Activated CD4-positive, alpha-beta memory T cell treated with anti-CD3 and anti-CD28 coated beads for 36 hours (primary cell): ENCODE measurements at regions of chr4 and their contacts with region 1.

Region 1: GRCh38 chr4:183840311-183840710 is 64.8 kb upstream of the STOX2 start:
- DNase-seq: peak; percentile 75
- H3K4me3 Mint-ChIP-seq: no peak overlapping the region
- H3K27ac Mint-ChIP-seq: no peak overlapping the region
- H3K4me1 Mint-ChIP-seq: no peaks in the 10 kb centered on the region
- H3K27me3 Mint-ChIP-seq: peaks cover 24% of the 10 kb centered on the region

Region 2: GRCh38 chr4:184097241-184097605 is 256.9 kb after region 1 on chr4:
- CTCF ChIA-PET with region 1: interaction called, 4 read pairs
- POLR2A ChIA-PET with region 1: no interaction called
- intact Hi-C with region 1: loop called (anchors 1 kb)
- DNase-seq: peak; percentile 59
- H3K4me3 Mint-ChIP-seq: peak overlapping the region; percentile 30
- H3K27ac Mint-ChIP-seq: no peak overlapping the region
- H3K4me1 Mint-ChIP-seq: peaks cover 6% of the 10 kb centered on the region
- H3K27me3 Mint-ChIP-seq: peaks cover 14% of the 10 kb centered on the region

Region 3: GRCh38 chr4:184168406-184169019 is 328.2 kb after region 1 on chr4:
- CTCF ChIA-PET with region 1: interaction called, 22 read pairs
- POLR2A ChIA-PET with region 1: no interaction called
- intact Hi-C with region 1: loop called (anchors 1 kb)
- DNase-seq: peak; percentile 70
- H3K4me3 Mint-ChIP-seq: no peak overlapping the region
- H3K27ac Mint-ChIP-seq: no peak overlapping the region
- H3K4me1 Mint-ChIP-seq: peaks cover 2% of the 10 kb centered on the region
- H3K27me3 Mint-ChIP-seq: peaks cover 44% of the 10 kb centered on the region

Region 4: DNA sequence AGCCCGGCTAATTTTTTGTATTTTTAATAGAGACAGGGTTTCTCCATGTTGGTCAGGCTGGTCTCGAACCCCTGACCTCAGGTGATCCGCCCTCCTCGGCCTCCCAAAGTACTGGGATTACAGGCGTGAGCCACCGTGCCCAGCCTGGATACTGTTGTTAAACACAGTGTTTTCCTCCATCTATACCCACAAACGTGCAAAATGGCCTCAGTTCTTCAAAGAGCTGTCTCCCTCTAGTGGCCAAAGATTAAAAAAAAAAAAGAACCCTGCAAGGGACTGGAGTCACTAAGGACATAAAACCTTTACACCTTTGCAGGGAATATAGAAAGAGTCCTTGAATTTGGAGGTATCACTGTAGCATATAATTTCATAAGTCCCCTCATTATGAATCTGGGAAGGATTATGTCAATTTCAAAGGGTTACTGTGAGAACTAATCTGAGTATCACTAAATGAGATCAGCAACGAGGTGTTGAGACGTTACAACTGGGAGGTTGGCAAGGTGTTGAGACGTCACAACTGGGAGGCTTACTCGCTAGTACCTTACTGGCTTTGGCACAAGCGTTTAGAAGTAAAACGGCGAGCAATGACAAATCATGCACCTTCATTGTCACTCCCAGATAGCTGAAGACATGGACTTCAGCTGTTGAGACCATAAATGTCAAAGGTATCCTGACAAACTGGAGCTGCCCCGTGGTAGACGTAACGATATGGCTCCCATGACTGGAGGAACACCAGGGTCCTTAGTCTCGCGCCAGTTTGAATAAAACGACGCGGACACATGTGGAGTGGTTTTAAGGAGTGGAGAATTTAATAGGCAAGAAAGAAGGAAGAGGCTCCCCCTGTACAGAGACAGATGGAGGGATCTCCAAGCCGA is 410.7 kb after region 1 on chr4:
- CTCF ChIA-PET with region 1: interaction called, 12 read pairs
- POLR2A ChIA-PET with region 1: no interaction called
- intact Hi-C with region 1: loop called (anchors 1 kb)
- DNase-seq: peak; percentile 45
- H3K4me3 Mint-ChIP-seq: peak overlapping the region; percentile 31
- H3K27ac Mint-ChIP-seq: peak overlapping the region; percentile 26
- H3K4me1 Mint-ChIP-seq: peaks cover 18% of the 10 kb centered on the region
- H3K27me3 Mint-ChIP-seq: peaks cover 2% of the 10 kb centered on the region